Heart left ventricle (tissue), 16 donors: ENCODE measurements at regions of chr18 and their contacts with region 1.

Region 1: DNA sequence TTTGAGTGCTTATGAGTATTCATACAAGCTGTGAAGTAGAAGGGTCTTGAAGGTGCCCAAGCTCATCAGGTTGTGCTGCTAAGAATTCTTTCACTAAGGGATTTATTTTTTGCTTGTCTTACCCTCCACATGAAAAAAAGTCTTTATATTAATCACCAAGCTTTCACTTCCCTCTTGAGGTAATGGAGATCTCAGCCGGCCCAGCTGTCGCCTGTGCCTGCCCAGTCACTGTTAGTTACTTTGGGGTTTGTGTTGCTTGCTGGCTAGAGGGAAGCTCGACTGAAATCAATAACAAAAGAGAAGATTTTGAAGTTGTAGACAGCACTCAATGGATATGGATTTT is 21.9 kb downstream of the MC2R start:
- DNase-seq: no peak
- ATAC-seq: no peak
- H3K4me3 ChIP-seq: no peak overlapping the region
- H3K27ac ChIP-seq: no peak overlapping the region
- H3K4me1 ChIP-seq: no peaks in the 10 kb centered on the region
- H3K27me3 ChIP-seq: peaks cover 0 to 7% (median 0%) of the 10 kb centered on the region in 9 donors
- CTCF ChIP-seq: no peak
- POLR2A ChIP-seq: no peak

Region 2: DNA sequence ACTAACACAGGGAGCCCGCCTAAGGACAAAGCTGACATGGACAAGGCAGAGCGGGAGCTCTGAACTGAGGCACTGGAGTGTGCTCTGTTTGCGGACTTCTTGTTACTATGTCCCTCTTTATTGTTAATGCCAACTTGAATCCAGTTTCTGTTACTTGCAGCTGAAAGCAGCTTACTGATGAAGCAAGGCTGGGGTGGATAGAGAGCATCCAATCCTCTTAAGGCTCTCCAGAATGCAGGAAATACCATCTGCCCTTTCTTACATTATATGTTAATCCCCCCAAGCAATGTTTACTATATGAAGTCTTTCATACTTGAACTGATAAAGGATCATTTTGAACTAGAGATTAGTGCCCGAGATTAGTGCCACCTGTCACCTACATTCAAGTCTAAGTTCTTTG is 176.5 kb before region 1 on chr18:
- intact Hi-C with region 1: no loop called
- DNase-seq: no peak
- ATAC-seq: no peak
- H3K4me3 ChIP-seq: no peak overlapping the region
- H3K27ac ChIP-seq: no peak overlapping the region
- H3K4me1 ChIP-seq: peaks cover 0 to 48% (median 7%) of the 10 kb centered on the region in 12 donors
- H3K27me3 ChIP-seq: no peaks in the 10 kb centered on the region
- CTCF ChIP-seq: no peak
- POLR2A ChIP-seq: no peak

Region 3: GRCh38 chr18:13831864-13832508 is 61.4 kb before region 1 on chr18:
- intact Hi-C with region 1: loop called in 1 of 10 experiments (anchors 10 kb)
- DNase-seq: no peak
- ATAC-seq: no peak
- H3K4me3 ChIP-seq: no peak overlapping the region
- H3K27ac ChIP-seq: no peak overlapping the region
- H3K4me1 ChIP-seq: no peaks in the 10 kb centered on the region
- H3K27me3 ChIP-seq: peaks cover 0 to 49% (median 7%) of the 10 kb centered on the region in 9 donors
- CTCF ChIP-seq: peak in 1 of 12 donors; percentile 22
- POLR2A ChIP-seq: no peak